Transverse colon (tissue), 4 donors: ENCODE measurements at regions of chr2 and their contacts with region 1.

Region 1: GRCh38 chr2:54115284-54116137 is at the start of gene ACYP2:
- DNase-seq: peak; percentile 95
- H3K4me3 ChIP-seq: peak within 1 kb of the TSS; percentile 55 to 76 (median 72)
- H3K27ac ChIP-seq: peak within 1 kb of the TSS; percentile 96 to 98 (median 98)
- H3K4me1 ChIP-seq: peaks cover 4 to 8% (median 4%) of the 10 kb centered on the region in 4 donors
- H3K27me3 ChIP-seq: no peaks in the 10 kb centered on the region
- CTCF ChIP-seq: peak in 4 of 5 experiments; percentile 10 to 31 (median 16)
- EP300 ChIP-seq: no peak
- POLR2A ChIP-seq: peak; percentile 77
- total RNA-seq, gene ACYP2: 1.6 to 77.4 (median 11.4) TPM

Region 2: DNA sequence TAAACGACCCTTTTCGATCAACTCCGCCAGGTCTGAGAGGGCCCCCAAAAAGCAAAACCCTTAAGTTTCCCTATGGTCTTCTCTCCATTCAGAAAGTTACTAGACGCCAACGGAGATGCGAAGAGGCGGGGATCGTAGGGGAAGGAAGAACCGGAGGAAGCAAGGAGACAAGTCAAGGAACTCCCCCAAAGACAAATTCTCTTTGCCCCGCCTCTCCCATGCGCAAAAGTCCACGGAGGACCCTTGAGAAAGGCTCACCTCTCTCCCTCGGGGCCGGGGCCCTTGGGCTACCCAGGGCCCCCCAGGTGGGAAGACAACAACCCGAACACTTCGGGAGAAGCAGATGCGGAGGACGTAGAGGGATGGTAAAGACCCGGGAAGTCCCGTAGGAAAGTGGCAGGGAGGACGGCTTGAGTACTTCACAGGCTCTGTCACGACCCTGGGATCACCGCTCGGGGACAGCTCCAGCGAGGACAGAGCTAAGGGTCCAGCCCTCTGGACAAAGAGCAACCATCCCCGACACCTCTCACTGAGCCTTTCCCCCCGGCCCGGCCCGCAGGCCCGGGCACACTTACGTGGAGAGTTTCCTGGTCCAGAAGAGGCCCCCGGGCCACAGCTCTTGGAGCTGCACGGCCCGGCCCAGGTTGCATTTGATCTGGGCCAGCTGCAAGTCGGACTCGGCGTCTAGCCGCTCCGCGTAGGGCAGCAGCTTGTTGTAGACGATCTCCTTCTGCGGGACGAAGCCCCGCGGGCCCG is 145.4 kb before region 1 on chr2:
- in situ Hi-C with region 1: no loop called
- intact Hi-C with region 1: loop called (anchors 10 kb)
- DNase-seq: peak; percentile 40
- H3K4me3 ChIP-seq: peak overlapping the region; percentile 81 to 99 (median 91)
- H3K27ac ChIP-seq: peak overlapping the region; percentile 97 to 100 (median 98)
- H3K4me1 ChIP-seq: peaks cover 5 to 55% (median 19%) of the 10 kb centered on the region in 4 donors
- H3K27me3 ChIP-seq: no peaks in the 10 kb centered on the region
- CTCF ChIP-seq: no peak
- EP300 ChIP-seq: no peak
- POLR2A ChIP-seq: no peak

Region 3: DNA sequence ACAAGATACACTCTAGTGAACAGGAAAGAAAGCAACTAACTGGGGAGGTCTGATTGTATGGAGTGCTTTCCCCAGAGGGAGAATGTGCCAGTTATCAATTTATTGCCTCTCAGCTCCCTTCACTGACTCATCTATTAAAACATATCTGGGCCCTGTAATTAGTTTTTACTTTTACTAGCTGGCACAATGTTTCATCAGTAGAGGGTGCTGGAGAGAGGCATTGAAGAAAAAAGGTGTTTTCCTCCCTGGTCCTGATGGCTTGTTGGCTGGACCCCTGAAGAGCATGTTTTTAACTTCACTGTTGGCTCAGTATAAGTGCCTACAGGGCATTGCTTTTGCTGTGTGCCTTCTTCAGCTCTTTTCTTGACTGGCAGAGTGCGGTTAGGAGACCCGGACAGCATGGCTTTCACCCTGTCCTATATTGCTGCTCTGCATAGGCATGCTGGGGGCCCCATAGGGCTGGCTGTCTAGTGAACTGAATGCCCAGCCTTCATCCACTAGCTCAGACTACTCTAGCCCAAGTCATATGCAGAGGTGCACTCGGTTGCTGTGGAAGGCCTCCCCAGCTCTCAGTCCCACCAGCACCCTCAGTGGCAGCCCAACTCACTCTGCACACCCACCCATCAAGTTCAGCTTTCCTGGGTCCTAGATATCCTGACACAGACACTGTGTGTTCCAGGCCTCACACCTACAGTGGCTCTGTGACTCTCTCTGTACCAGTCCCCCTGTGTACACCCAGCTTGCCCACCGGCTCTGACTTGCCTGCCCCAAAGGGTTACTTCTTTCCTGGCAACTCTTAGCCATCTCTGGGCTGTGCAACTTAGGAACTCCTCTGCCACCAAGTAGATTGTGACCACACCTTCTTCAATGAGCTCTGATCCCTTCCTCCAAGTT is 62.4 kb before region 1 on chr2:
- in situ Hi-C with region 1: no loop called
- intact Hi-C with region 1: no loop called
- DNase-seq: no peak
- H3K4me3 ChIP-seq: no peak overlapping the region
- H3K27ac ChIP-seq: peak overlapping the region in 3 of 4 donors; percentile 5 to 36 (median 20)
- H3K4me1 ChIP-seq: peaks cover 0 to 13% (median 7%) of the 10 kb centered on the region in 4 donors
- H3K27me3 ChIP-seq: no peaks in the 10 kb centered on the region
- CTCF ChIP-seq: peak in 1 of 5 experiments; percentile 6
- EP300 ChIP-seq: no peak
- POLR2A ChIP-seq: no peak

Region 4: GRCh38 chr2:54723131-54723995 is 607.9 kb after region 1 on chr2 and contains the start of gene EML6:
- in situ Hi-C with region 1: loop called in 2 of 4 experiments (anchors 25 kb)
- intact Hi-C with region 1: no loop called
- DNase-seq: peak; percentile 99
- H3K4me3 ChIP-seq: peak within 1 kb of the TSS; percentile 41 to 68 (median 60)
- H3K27ac ChIP-seq: peak within 1 kb of the TSS; percentile 75 to 85 (median 78)
- H3K4me1 ChIP-seq: peaks cover 0 to 19% (median 14%) of the 10 kb centered on the region in 4 donors
- H3K27me3 ChIP-seq: peaks cover 27% of the 10 kb centered on the region
- CTCF ChIP-seq: peak in 3 of 5 experiments; percentile 25 to 37 (median 35)
- EP300 ChIP-seq: no peak
- POLR2A ChIP-seq: peak; percentile 70
- total RNA-seq, gene EML6: 1.5 to 8.2 (median 3.4) TPM

Region 5: GRCh38 chr2:55223958-55224760 is 1108.6 kb after region 1 on chr2:
- in situ Hi-C with region 1: loop called in 1 of 4 experiments (anchors 25 kb)
- intact Hi-C with region 1: no loop called
- DNase-seq: no peak
- H3K4me3 ChIP-seq: peak overlapping the region in 3 of 4 donors; percentile 77 to 92 (median 77)
- H3K27ac ChIP-seq: peak overlapping the region; percentile 90 to 97 (median 94)
- H3K4me1 ChIP-seq: peaks cover 0 to 10% (median 5%) of the 10 kb centered on the region in 4 donors
- H3K27me3 ChIP-seq: no peaks in the 10 kb centered on the region
- CTCF ChIP-seq: no peak
- EP300 ChIP-seq: no peak
- POLR2A ChIP-seq: no peak